Activated B cell treated with CpG ODN at 0.5 μM for 24 hours (primary cell): ENCODE measurements at regions of chr6 and their contacts with region 1.

Region 1: DNA sequence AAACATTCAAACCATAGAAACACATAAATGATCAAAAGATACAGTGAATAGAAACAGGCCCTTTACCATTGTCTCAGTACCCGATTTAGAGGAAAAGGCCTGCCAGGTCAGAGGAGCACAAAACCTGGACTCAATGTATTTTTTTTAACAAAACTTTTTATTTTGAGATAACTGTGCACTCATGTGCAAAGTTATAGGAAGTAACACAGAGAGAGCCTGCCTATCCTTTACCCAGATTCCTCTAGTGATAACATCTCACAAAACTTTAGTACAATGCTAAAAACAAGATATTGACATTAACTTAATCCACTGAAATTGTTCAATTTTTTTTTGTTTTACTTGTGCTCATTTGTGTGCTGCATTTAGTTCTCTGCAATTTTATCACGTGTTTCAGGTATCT is 36.8 kb upstream of the SAMD3 start:
- DNase-seq: no peak
- ATAC-seq: peak; percentile 64
- H3K4me3 Mint-ChIP-seq: peak overlapping the region; percentile 85
- H3K27ac Mint-ChIP-seq: peak overlapping the region; percentile 95
- H3K4me1 Mint-ChIP-seq: peaks cover 37% of the 10 kb centered on the region
- H3K27me3 Mint-ChIP-seq: no peaks in the 10 kb centered on the region
- CTCF ChIP-seq: no peak

Region 2: GRCh38 chr6:129748212-129748900 is 511.2 kb before region 1 on chr6:
- CTCF ChIA-PET with region 1: no interaction called
- POLR2A ChIA-PET with region 1: no interaction called
- intact Hi-C with region 1: loop called (anchors 10 kb)
- DNase-seq: no peak
- ATAC-seq: peak; percentile 89
- H3K4me3 Mint-ChIP-seq: peak overlapping the region; percentile 66
- H3K27ac Mint-ChIP-seq: peak overlapping the region; percentile 94
- H3K4me1 Mint-ChIP-seq: peaks cover 50% of the 10 kb centered on the region
- H3K27me3 Mint-ChIP-seq: no peaks in the 10 kb centered on the region
- CTCF ChIP-seq: no peak

Region 3: DNA sequence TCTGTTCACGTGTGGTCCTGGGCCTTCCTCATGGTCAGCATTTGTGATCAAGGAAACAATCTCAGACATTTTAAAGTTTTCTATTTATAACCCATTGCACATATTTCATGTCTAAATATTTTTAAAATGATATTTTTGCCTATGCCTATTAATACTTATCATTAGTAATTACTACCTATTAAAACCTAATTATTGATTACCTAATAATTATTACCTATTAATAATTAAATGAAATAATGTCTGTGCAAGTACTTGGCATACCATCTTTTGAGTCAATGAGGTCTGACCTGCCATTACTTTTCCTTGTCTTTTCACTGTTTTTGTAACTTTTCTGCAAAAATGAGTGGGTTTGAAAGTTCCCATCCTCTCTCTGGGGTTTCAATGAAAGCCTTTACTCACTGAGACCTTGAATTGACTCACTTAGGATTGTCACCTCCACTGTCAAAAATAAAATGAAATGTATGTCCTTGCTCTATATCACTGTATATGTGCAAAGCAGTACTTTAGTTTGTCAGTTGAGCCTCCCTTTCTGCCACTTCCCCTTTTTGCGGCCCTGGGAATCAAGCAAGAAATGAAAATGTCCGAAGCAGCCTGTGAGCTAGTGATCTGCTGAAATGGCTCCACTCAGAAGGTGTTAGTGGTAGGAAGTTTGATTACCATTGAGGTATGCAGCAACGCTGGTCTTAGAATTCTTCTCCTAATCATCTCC is 153.4 kb before region 1 on chr6:
- CTCF ChIA-PET with region 1: no interaction called
- POLR2A ChIA-PET with region 1: interaction called, 10 read pairs
- intact Hi-C with region 1: no loop called
- DNase-seq: no peak
- ATAC-seq: peak; percentile 90
- H3K4me3 Mint-ChIP-seq: peak overlapping the region; percentile 36
- H3K27ac Mint-ChIP-seq: peak overlapping the region; percentile 91
- H3K4me1 Mint-ChIP-seq: peaks cover 45% of the 10 kb centered on the region
- H3K27me3 Mint-ChIP-seq: no peaks in the 10 kb centered on the region
- CTCF ChIP-seq: no peak

Region 4: DNA sequence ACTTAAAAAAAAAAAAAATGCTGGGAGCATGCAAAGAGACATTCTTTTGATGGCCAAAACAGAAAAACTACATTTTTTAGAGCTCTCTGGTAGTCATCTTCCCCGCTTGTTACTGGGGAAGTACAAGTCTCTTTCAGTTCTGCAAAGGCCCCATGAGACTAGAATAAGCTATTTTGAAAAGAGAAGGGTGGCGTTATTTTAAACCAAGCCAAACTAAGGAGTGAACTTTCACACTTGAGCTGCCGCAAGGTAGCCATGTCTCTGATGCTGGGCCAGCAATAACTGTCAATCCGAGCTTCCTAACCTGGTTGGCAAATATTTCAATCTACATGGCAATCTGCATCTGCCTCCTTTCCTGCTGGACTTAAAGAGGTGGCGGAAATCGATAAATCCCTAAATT is 144.5 kb before region 1 on chr6:
- CTCF ChIA-PET with region 1: no interaction called
- POLR2A ChIA-PET with region 1: no interaction called
- intact Hi-C with region 1: loop called (anchors 2 kb)
- DNase-seq: no peak
- ATAC-seq: peak; percentile 91
- H3K4me3 Mint-ChIP-seq: peak overlapping the region; percentile 73
- H3K27ac Mint-ChIP-seq: peak overlapping the region; percentile 96
- H3K4me1 Mint-ChIP-seq: peaks cover 79% of the 10 kb centered on the region
- H3K27me3 Mint-ChIP-seq: no peaks in the 10 kb centered on the region
- CTCF ChIP-seq: no peak

Region 5: GRCh38 chr6:130282234-130282995 is 22.9 kb after region 1 on chr6:
- CTCF ChIA-PET with region 1: interaction called, 3 read pairs
- POLR2A ChIA-PET with region 1: no interaction called
- intact Hi-C with region 1: loop called (anchors 2 kb)
- DNase-seq: no peak
- ATAC-seq: peak; percentile 49
- H3K4me3 Mint-ChIP-seq: no peak overlapping the region
- H3K27ac Mint-ChIP-seq: no peak overlapping the region
- H3K4me1 Mint-ChIP-seq: peaks cover 6% of the 10 kb centered on the region
- H3K27me3 Mint-ChIP-seq: no peaks in the 10 kb centered on the region
- CTCF ChIP-seq: no peak

Region 6: GRCh38 chr6:130969791-130970491 is 710.4 kb after region 1 on chr6:
- CTCF ChIA-PET with region 1: no interaction called
- POLR2A ChIA-PET with region 1: no interaction called
- intact Hi-C with region 1: no loop called
- DNase-seq: no peak
- ATAC-seq: no peak
- H3K4me3 Mint-ChIP-seq: no peak overlapping the region
- H3K27ac Mint-ChIP-seq: no peak overlapping the region
- H3K4me1 Mint-ChIP-seq: peaks cover 17% of the 10 kb centered on the region
- H3K27me3 Mint-ChIP-seq: no peaks in the 10 kb centered on the region
- CTCF ChIP-seq: no peak